Common myeloid progenitor, CD34-positive (primary cell): ENCODE measurements at regions of chr1 and their contacts with region 1.

Region 1: GRCh38 chr1:203038891-203039608 is 12.8 kb downstream of the PPFIA4 start:
- DNase-seq: peak; percentile 54 to 74 (median 64)
- H3K4me3 ChIP-seq: no peak overlapping the region
- H3K27ac ChIP-seq: no peak overlapping the region
- H3K4me1 ChIP-seq: peaks cover 0 to 26% (median 16%) of the 10 kb centered on the region in 4 experiments
- H3K27me3 ChIP-seq: peaks cover 0 to 13% (median 0%) of the 10 kb centered on the region in 5 experiments

Region 2: GRCh38 chr1:203026031-203026989 is 12.7 kb before region 1 on chr1 and contains the start of gene PPFIA4:
- CTCF ChIA-PET with region 1: interaction called, 65 read pairs
- POLR2A ChIA-PET with region 1: no interaction called
- DNase-seq: peak; percentile 82 to 91 (median 89)
- H3K4me3 ChIP-seq: peak within 1 kb of the TSS in 6 of 7 experiments; percentile 58 to 83 (median 66)
- H3K27ac ChIP-seq: no peak within 1 kb of the TSS
- H3K4me1 ChIP-seq: peaks cover 0 to 14% (median 8%) of the 10 kb centered on the region in 4 experiments
- H3K27me3 ChIP-seq: peaks cover 3 to 24% (median 21%) of the 10 kb centered on the region in 5 experiments

Region 3: DNA sequence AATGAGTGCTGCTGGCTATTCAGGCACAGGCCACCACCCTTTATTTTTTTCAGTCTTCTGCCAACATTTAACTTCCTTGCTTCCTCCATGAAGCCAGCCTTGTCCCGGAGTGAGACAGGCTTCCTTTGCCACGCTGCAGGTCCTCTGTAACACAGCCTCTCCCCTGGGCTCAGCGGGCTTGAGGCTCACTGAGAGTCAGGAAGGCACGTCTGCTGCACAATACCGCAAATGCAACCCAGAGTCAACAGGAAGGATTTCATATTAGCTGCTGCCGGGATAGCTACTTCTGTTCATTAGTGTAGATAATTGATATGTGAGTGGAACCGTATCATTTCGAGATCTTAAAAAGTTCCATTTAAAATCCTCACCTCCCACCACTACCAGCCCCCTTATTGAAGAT is 24.2 kb after region 1 on chr1:
- CTCF ChIA-PET with region 1: interaction called, 88 read pairs
- POLR2A ChIA-PET with region 1: no interaction called
- DNase-seq: peak in 2 of 3 donors; percentile 40 to 42
- H3K4me3 ChIP-seq: no peak overlapping the region
- H3K27ac ChIP-seq: no peak overlapping the region
- H3K4me1 ChIP-seq: peaks cover 2 to 32% (median 16%) of the 10 kb centered on the region in 4 experiments
- H3K27me3 ChIP-seq: peaks cover 0 to 2% (median 0%) of the 10 kb centered on the region in 5 experiments

Region 4: GRCh38 chr1:203117611-203118575 is 78.8 kb after region 1 on chr1:
- CTCF ChIA-PET with region 1: interaction called, 60 read pairs
- POLR2A ChIA-PET with region 1: interaction called, 3 read pairs
- DNase-seq: peak; percentile 59 to 72 (median 72)
- H3K4me3 ChIP-seq: no peak overlapping the region
- H3K27ac ChIP-seq: no peak overlapping the region
- H3K4me1 ChIP-seq: peaks cover 0 to 13% (median 9%) of the 10 kb centered on the region in 4 experiments
- H3K27me3 ChIP-seq: peaks cover 0 to 67% (median 28%) of the 10 kb centered on the region in 5 experiments

Region 5: GRCh38 chr1:203133970-203134725 is 95.1 kb after region 1 on chr1:
- CTCF ChIA-PET with region 1: interaction called, 54 read pairs
- POLR2A ChIA-PET with region 1: no interaction called
- DNase-seq: peak in 1 of 3 donors; percentile 18
- H3K4me3 ChIP-seq: no peak overlapping the region
- H3K27ac ChIP-seq: no peak overlapping the region
- H3K4me1 ChIP-seq: peaks cover 4 to 15% (median 10%) of the 10 kb centered on the region in 4 experiments
- H3K27me3 ChIP-seq: peaks cover 0 to 25% (median 17%) of the 10 kb centered on the region in 5 experiments

Region 6: GRCh38 chr1:203202431-203203245 is 163.6 kb after region 1 on chr1:
- CTCF ChIA-PET with region 1: interaction called, 10 read pairs
- POLR2A ChIA-PET with region 1: no interaction called
- DNase-seq: no peak
- H3K4me3 ChIP-seq: no peak overlapping the region
- H3K27ac ChIP-seq: no peak overlapping the region
- H3K4me1 ChIP-seq: peaks cover 0 to 10% (median 0%) of the 10 kb centered on the region in 4 experiments
- H3K27me3 ChIP-seq: peaks cover 0 to 4% (median 2%) of the 10 kb centered on the region in 5 experiments

Region 7: DNA sequence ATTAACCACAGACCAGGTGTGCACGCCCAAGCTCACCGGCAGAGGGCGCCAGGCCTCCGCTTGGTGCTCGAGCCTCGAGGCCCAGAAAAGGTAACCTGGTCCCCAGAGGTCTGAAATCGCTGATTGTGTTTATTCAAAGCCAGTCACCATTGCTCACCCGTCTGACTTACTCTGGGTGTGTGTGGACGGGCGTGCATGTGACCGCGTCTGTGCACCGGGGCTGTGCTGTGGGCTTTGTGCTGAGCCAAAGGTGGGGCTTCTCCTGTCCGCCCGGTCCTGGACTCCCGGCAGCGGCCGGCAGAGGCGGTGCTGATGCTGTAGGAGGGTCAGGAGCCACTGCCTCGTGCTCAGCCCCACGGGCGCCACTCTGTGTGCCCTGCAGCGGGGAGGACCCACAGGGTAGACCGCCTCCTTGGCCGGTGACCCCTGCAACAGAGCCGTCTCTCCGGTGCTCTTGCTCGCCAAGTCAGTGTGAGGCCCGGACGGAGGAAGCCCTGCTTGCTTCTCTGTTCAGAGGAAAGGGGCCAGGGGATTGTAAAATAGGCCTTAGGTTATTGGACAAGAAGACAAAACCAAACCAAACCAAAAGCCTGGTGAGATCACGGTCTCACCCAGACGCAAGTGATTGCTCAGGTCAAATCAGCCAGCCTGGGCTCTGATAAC is 234.3 kb after region 1 on chr1:
- CTCF ChIA-PET with region 1: interaction called, 147 read pairs
- POLR2A ChIA-PET with region 1: no interaction called
- DNase-seq: peak; percentile 78 to 89 (median 86)
- H3K4me3 ChIP-seq: peak overlapping the region in 3 of 7 experiments; percentile 38 to 52 (median 46)
- H3K27ac ChIP-seq: no peak overlapping the region
- H3K4me1 ChIP-seq: peaks cover 7 to 52% (median 42%) of the 10 kb centered on the region in 4 experiments
- H3K27me3 ChIP-seq: no peaks in the 10 kb centered on the region